HEK293 (cell line): ENCODE measurements at regions of chr1 and their contacts with region 1.

Region 1: GRCh38 chr1:22704440-22705067 is 6.1 kb upstream of the EPHB2 start:
- H3K4me3 ChIP-seq: no peak overlapping the region
- H3K27ac ChIP-seq: no peak overlapping the region
- H3K4me1 ChIP-seq: no peaks in the 10 kb centered on the region
- CTCF ChIP-seq: peak; percentile 73

Region 2: GRCh38 chr1:22673486-22674409 is 30.8 kb before region 1 on chr1:
- CTCF ChIA-PET with region 1: interaction called, 12 read pairs
- POLR2A ChIA-PET with region 1: no interaction called
- H3K4me3 ChIP-seq: no peak overlapping the region
- H3K27ac ChIP-seq: no peak overlapping the region
- H3K4me1 ChIP-seq: no peaks in the 10 kb centered on the region
- CTCF ChIP-seq: no peak; the same call in 1 of the 2 replicates

Region 3: GRCh38 chr1:22691031-22691753 is 13.4 kb before region 1 on chr1:
- CTCF ChIA-PET with region 1: interaction called, 10 read pairs
- POLR2A ChIA-PET with region 1: no interaction called
- H3K4me3 ChIP-seq: no peak overlapping the region
- H3K27ac ChIP-seq: no peak overlapping the region
- H3K4me1 ChIP-seq: no peaks in the 10 kb centered on the region
- CTCF ChIP-seq: no peak

Region 4: DNA sequence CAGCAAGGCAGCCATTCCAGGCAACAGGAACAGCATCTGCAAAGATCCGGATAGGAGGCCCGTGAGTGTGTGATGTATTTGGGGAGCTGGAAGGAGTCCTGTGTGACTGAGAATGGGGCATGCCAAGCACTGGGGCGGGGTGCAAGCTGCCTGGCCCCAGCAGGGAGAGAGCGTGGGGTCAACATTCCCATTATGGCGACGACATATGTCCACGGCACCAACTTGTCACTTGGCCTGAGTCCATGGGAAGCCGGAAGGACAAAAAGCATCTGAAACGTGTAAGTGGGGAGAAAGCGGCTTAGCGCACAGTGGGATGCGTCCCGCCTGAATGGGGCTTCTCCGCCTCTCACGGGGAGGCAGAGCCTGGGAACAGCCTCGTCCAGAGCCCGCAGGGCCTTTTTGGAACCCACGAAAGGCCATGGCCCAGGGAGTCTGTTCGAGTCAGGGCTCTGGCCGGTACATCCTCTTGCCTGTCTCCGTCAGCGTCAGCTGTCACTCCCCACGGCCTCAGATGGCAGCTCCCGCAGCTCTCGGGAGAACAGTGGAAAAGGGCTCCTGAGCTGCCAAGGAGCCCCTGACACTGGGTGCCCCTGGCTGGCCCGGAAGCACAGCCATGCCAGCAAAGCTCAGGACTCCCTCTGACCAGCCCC is 18.5 kb after region 1 on chr1:
- CTCF ChIA-PET with region 1: interaction called, 25 read pairs
- POLR2A ChIA-PET with region 1: no interaction called
- H3K4me3 ChIP-seq: no peak overlapping the region
- H3K27ac ChIP-seq: no peak overlapping the region
- H3K4me1 ChIP-seq: no peaks in the 10 kb centered on the region
- CTCF ChIP-seq: no peak

Region 5: DNA sequence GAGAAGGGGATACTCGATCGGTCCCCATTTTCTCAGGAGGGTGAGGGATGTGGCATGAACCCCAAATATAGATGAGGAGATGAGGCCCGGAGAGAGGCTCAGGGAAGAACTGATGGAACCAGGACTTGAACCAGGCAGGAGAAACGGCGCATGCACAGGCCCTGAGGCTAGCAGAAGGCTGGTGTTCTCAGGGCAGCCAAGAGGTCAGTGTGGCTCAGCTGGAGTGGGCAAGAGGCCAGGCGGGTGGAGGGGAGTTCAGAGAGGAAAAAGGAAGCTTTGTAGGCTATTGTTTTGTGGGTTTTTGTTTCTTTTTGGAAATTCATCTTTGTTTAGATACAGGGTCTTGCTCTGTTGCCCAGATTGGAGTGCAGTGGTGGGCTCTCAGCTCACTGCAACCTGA is 146.1 kb after region 1 on chr1:
- CTCF ChIA-PET with region 1: interaction called, 10 read pairs
- POLR2A ChIA-PET with region 1: no interaction called
- H3K4me3 ChIP-seq: no peak overlapping the region
- H3K27ac ChIP-seq: no peak overlapping the region
- H3K4me1 ChIP-seq: no peaks in the 10 kb centered on the region
- CTCF ChIP-seq: no peak

Region 6: GRCh38 chr1:22889213-22889827 is 184.8 kb after region 1 on chr1:
- CTCF ChIA-PET with region 1: interaction called, 55 read pairs
- POLR2A ChIA-PET with region 1: no interaction called
- H3K4me3 ChIP-seq: no peak overlapping the region
- H3K27ac ChIP-seq: no peak overlapping the region
- H3K4me1 ChIP-seq: no peaks in the 10 kb centered on the region
- CTCF ChIP-seq: no peak

Region 7: DNA sequence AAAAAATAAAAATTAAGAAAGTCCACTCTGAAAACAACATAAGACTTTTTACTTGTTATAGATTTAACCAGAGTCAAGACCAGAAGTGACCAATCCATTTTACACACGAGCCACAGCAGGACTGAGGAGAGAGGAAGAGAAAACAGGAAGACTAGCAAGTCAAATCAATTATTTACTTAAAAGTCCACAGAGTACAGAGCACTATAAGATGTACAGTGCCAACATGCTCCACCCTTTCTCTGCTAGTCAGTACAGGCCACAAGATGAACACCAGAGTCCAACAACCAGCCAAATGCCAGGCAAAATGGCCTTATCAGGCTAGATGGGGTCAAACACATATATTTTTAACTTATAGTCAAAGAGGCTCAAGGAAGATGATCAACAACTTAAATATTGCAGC is 444.6 kb after region 1 on chr1:
- CTCF ChIA-PET with region 1: no interaction called
- POLR2A ChIA-PET with region 1: no interaction called
- H3K4me3 ChIP-seq: no peak overlapping the region
- H3K27ac ChIP-seq: no peak overlapping the region
- H3K4me1 ChIP-seq: peaks cover 7% of the 10 kb centered on the region; the same call in 1 of the 2 replicates
- CTCF ChIP-seq: no peak